GM10248 (cell line): ENCODE measurements at regions of chr18 and their contacts with region 1.

Region 1: DNA sequence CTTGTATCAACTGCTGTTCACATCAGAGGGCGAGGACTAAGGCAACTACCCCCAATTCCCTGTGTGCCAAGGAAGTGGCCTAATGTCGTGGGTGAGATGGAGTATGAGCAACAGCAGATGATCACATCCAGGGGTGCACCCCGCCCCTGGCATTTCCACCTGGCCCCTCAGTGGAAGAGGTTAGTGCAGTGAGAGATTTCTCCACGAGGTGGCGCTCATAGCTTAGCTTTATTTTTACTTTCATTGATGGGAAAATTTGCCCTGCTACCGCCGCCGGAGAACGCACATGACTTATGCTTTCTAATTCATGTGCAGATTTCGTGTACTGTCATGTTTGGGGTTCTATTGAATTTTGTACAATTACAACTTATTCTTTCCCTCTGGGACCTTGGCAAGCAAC is 470.6 kb upstream of the MEX3C start:
- DNase-seq: peak; percentile 53
- CTCF ChIP-seq: peak; percentile 76

Region 2: GRCh38 chr18:51461956-51462355 is 206.1 kb before region 1 on chr18:
- CTCF ChIA-PET with region 1: no interaction called
- POLR2A ChIA-PET with region 1: no interaction called
- DNase-seq: no peak
- CTCF ChIP-seq: no peak

Region 3: DNA sequence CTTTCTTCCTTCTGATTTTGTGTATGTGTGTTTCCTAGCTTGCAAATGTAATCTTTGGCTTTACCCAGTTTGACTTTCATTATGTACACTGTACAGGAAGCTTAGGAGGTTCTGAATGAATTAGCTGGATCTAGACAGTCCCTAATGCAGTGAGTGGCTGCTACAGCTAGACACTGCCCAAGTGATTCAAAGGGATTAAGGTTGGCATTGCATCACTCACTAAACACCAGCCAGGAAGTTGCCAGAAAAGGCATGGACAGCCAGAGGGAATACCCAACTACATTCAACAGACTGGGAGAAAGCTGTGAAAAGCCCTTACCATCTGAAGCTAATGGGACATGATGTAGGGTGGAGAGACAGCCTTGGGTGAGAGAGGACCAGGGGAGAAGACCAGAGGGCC is 154.6 kb before region 1 on chr18:
- CTCF ChIA-PET with region 1: no interaction called
- POLR2A ChIA-PET with region 1: no interaction called
- DNase-seq: no peak
- CTCF ChIP-seq: no peak

Region 4: DNA sequence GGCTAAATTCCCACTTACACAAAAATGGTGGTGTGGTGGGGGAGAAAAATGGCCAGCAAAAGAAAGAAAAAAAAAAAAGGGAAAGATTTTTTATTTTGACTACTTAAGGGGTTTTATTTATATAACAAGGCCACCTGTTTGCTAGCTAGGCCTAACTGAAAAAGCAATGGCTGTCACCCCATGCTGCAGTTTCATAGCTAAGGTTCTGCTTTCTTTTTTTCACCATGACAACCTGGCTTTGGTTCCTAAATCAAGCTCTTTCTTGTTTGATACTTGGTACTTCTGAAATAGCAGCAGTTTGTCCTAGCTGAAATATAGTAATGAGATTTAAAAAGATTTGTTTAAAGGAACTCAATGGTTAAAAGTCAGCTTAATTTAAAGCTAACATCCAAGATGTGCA is 37.4 kb before region 1 on chr18:
- CTCF ChIA-PET with region 1: interaction called, 12 read pairs
- POLR2A ChIA-PET with region 1: no interaction called
- DNase-seq: no peak
- CTCF ChIP-seq: no peak

Region 5: DNA sequence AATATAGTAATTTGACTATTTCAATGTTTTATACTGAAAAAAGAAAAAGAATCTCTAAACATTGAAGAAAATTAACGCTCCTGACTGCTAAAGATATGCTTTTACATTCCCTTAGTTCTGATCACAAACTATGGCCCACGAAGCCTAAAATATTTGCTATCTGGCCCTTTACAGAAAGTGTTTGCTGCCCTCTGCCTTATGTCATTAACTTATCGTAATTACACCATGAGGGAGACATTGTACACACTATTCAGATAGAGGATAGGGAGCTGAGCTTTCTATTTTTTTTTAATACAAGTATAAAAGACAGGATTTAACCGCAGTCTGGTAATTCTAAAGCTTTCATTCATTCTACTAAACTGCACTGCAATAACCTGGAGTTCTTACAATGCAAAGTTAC is 278.8 kb after region 1 on chr18:
- CTCF ChIA-PET with region 1: interaction called, 10 read pairs
- POLR2A ChIA-PET with region 1: no interaction called
- DNase-seq: no peak
- CTCF ChIP-seq: no peak

Region 6: DNA sequence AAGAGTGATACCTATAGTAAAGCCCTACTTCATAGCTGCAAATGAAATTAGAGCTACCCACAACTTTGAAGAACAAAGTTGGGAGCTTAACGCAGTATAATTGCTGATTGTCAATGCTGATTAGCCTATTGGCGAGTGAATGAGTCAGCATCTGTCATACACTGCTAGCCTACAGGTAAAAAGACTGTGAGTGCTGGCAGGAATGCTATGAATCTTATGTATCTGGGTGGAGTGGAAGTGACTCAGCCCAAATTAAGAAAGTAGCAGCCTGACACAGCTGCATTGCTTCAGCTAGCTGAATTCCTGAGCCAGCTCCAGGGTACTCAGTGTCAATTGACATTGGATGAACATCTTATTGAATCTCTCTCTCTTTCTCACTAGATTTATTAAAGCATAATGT is 492.6 kb after region 1 on chr18:
- CTCF ChIA-PET with region 1: no interaction called
- POLR2A ChIA-PET with region 1: no interaction called
- DNase-seq: no peak
- CTCF ChIP-seq: no peak

Region 7: GRCh38 chr18:52288403-52289004 is 620.4 kb after region 1 on chr18:
- CTCF ChIA-PET with region 1: interaction called, 94 read pairs
- POLR2A ChIA-PET with region 1: no interaction called
- DNase-seq: peak; percentile 26
- CTCF ChIP-seq: peak; percentile 87